Endothelial cell of umbilical vein (primary cell): ENCODE measurements at regions of chr2 and their contacts with region 1.

Region 1: DNA sequence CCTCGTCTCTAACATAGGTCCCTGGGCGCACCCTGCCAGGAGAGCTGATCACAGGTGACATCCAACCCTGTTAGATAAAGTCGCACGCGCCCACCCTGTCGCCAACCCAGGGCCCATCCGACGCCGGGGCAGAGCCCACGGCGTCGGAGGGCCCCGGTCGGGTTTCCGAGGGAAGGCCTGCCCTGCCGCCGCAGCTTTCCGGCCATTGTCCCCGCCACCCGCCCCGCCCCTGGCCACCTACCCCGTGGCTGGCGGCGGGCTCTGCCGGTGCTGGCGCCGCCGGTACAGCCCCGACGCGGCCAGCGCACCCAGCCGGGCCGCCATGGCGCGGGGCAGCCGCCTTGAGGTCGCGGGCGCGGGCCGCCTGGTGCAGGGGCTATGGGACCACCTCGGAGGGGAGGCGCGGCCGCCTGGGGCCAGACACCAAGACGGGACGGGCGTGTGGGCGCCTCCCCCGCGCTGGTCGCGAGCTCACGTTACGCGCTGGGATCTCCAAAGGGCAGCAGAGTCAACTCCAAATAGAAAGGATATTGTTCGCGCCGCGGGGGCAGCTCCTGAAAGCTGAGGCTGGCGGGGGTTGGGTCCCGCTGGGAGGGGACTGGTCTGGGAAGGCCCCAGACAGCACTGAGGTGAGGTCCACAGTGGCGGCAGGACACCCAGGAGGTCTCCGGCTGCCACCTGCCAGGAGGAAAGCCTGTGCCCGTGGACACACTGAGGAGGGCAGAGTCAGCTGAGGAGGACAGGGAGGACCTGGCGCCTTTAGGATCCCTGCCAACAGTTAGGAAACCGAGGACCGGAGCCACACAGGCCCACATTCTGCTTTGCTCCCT is 11.1 kb downstream of the LIMS2 start:
- DNase-seq: peak; percentile 50
- H3K4me3 ChIP-seq: peak overlapping the region in 2 of 3 experiments; percentile 20 to 32
- H3K27ac ChIP-seq: peak overlapping the region; percentile 80
- H3K4me1 ChIP-seq: peaks cover 48% of the 10 kb centered on the region
- H3K27me3 ChIP-seq: no peaks in the 10 kb centered on the region
- CTCF ChIP-seq: no peak
- POLR2A ChIP-seq: peak; percentile 29

Region 2: DNA sequence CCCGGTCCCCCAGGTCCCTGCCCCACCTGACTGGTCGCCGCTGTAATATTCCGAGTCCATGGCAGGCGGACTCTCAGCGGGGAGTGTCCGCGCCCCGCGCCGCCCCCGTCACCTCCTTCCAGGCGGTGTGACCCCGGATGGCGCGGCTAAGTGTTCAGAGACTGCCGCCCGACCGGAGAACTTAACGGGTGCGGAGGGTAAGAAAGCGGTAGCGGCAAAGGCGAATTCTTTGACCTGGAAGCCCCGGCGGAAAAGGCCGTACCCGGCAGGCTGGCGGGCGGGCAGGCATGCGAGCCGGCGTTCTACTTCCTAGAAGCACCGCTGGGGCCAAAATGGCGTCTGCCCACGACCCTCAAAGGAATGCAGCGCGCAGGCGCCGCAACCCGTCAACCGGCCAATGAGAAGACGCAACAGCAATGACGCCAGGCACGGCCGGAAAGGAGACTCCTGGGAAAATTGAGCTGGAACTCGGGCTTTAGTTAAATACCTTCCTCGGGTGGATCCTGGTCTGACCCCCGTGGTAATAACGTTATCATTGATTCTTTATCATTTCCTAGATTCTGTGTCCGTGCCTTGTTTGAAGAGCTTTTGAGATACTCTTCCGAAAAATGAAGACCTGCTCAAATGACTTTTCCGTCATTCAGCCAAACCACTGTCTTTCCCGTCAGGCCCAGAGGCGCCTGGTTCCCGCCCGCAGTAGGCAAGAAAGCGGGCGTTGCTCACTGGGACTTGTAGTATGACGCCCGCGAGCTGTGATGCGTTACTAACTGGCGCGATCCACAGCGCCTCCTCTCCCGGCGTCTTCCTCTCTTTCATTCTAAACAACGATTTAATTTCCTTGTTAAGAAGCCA is 137.9 kb before region 1 on chr2 and contains the start of gene IWS1:
- CTCF ChIA-PET with region 1: no interaction called
- POLR2A ChIA-PET with region 1: no interaction called
- dilution Hi-C with region 1: no loop called
- intact Hi-C with region 1: loop called (anchors 1 kb)
- DNase-seq: peak; percentile 98
- H3K4me3 ChIP-seq: peak within 1 kb of the TSS; percentile 78 to 92 (median 88)
- H3K27ac ChIP-seq: peak within 1 kb of the TSS; percentile 100
- H3K4me1 ChIP-seq: peaks cover 11% of the 10 kb centered on the region
- H3K27me3 ChIP-seq: no peaks in the 10 kb centered on the region
- CTCF ChIP-seq: peak in 1 of 2 donors; percentile 14
- POLR2A ChIP-seq: peak; percentile 88
- total RNA-seq, gene IWS1: 44.9 and 51.0 TPM in 2 replicates

Region 3: GRCh38 chr2:127637725-127638252 is 26.5 kb before region 1 on chr2:
- CTCF ChIA-PET with region 1: interaction called, 5 read pairs
- POLR2A ChIA-PET with region 1: no interaction called
- dilution Hi-C with region 1: no loop called
- intact Hi-C with region 1: loop called (anchors 1 kb)
- DNase-seq: peak; percentile 70
- H3K4me3 ChIP-seq: no peak overlapping the region
- H3K27ac ChIP-seq: peak overlapping the region; percentile 92
- H3K4me1 ChIP-seq: peaks cover 34% of the 10 kb centered on the region
- H3K27me3 ChIP-seq: no peaks in the 10 kb centered on the region
- CTCF ChIP-seq: no peak
- POLR2A ChIP-seq: peak; percentile 84

Region 4: GRCh38 chr2:127649684-127650040 is 14.6 kb before region 1 on chr2:
- CTCF ChIA-PET with region 1: interaction called, 15 read pairs
- POLR2A ChIA-PET with region 1: no interaction called
- dilution Hi-C with region 1: no loop called
- intact Hi-C with region 1: loop called (anchors 1 kb)
- DNase-seq: peak; percentile 69
- H3K4me3 ChIP-seq: no peak overlapping the region
- H3K27ac ChIP-seq: no peak overlapping the region
- H3K4me1 ChIP-seq: peaks cover 25% of the 10 kb centered on the region
- H3K27me3 ChIP-seq: no peaks in the 10 kb centered on the region
- CTCF ChIP-seq: peak; percentile 85 to 88
- POLR2A ChIP-seq: no peak

Region 5: GRCh38 chr2:127675331-127676261 is 11.3 kb after region 1 on chr2 and contains the start of gene LIMS2:
- CTCF ChIA-PET with region 1: interaction called, 9 read pairs
- POLR2A ChIA-PET with region 1: no interaction called
- dilution Hi-C with region 1: no loop called
- intact Hi-C with region 1: loop called (anchors 1 kb)
- DNase-seq: peak; percentile 36
- H3K4me3 ChIP-seq: peak within 1 kb of the TSS; percentile 48 to 58 (median 58)
- H3K27ac ChIP-seq: no peak within 1 kb of the TSS
- H3K4me1 ChIP-seq: peaks cover 18% of the 10 kb centered on the region
- H3K27me3 ChIP-seq: no peaks in the 10 kb centered on the region
- CTCF ChIP-seq: peak in 1 of 2 donors; percentile 37
- POLR2A ChIP-seq: no peak
- total RNA-seq, gene LIMS2: 45.7 and 48.3 TPM in 2 replicates

Region 6: GRCh38 chr2:127695491-127696472 is 31.5 kb after region 1 on chr2:
- CTCF ChIA-PET with region 1: interaction called, 18 read pairs
- POLR2A ChIA-PET with region 1: no interaction called
- dilution Hi-C with region 1: no loop called
- intact Hi-C with region 1: loop called (anchors 2 kb)
- DNase-seq: peak; percentile 75
- H3K4me3 ChIP-seq: peak overlapping the region in 2 of 3 experiments; percentile 21 to 22
- H3K27ac ChIP-seq: no peak overlapping the region
- H3K4me1 ChIP-seq: peaks cover 8% of the 10 kb centered on the region
- H3K27me3 ChIP-seq: no peaks in the 10 kb centered on the region
- CTCF ChIP-seq: peak; percentile 60 to 73
- POLR2A ChIP-seq: no peak

Region 7: DNA sequence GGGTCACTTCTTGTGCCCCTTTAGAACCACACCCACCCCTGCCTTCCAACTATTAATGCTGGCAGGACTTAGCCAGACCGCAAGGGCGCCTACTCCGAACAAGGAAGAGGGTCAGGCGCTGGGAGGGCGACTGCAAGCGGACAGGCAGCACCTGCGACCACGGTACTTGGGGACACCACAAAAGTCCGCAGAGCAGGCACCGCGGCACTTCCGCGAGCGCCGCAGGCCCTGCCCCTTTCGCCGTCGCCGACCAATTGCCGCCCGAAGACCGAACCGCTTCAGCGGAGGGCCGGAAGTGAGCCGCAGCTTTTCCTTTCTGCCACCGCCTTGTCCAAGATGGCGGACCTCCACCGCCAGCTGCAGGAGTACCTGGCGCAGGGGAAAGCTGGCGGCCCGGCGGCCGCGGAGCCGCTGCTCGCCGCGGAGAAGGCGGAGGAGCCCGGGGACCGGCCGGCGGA is 36.9 kb after region 1 on chr2 and contains the start of gene SFT2D3:
- CTCF ChIA-PET with region 1: interaction called, 18 read pairs
- POLR2A ChIA-PET with region 1: no interaction called
- dilution Hi-C with region 1: no loop called
- intact Hi-C with region 1: loop called (anchors 2 kb)
- DNase-seq: peak; percentile 91
- H3K4me3 ChIP-seq: peak within 1 kb of the TSS; percentile 40 to 79 (median 45)
- H3K27ac ChIP-seq: peak within 1 kb of the TSS; percentile 85
- H3K4me1 ChIP-seq: peaks cover 17% of the 10 kb centered on the region
- H3K27me3 ChIP-seq: no peaks in the 10 kb centered on the region
- CTCF ChIP-seq: no peak
- POLR2A ChIP-seq: peak; percentile 99
- total RNA-seq, gene SFT2D3: 4.4 and 4.7 TPM in 2 replicates

Region 8: DNA sequence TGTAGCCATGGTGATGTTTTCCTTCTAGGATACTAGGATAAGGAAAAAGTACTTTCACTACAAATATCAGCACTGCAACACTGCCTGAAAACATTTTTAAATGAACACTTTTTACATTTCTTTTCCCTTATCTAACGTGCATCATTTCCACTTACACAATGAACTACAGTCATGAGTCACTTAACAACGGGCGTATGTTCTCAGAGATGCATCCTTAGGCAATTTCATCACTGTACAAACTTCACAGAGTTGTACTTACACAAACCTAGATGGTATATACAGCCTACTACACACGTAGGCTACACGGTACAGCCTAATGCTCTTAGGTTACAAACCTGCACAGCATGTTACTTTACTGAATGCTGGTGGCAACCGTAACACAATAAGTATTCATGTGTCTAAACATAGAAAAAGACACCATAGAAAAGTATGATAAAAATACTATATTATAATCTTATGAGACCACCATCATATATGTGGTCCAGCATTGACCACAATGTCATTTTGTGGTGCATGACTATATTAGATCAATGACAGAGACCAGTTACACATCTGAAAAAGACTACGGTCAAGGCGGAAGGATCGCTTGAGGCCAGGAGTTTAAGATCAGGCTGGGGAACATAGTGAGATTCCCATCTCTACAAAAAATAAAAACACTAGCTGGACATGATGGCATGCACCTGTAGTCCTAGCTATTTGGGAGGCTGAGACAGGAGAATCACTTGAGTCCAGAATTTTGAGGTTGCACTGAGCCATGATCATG is 106.9 kb after region 1 on chr2:
- CTCF ChIA-PET with region 1: no interaction called
- POLR2A ChIA-PET with region 1: no interaction called
- dilution Hi-C with region 1: no loop called
- intact Hi-C with region 1: no loop called
- DNase-seq: peak; percentile 69
- H3K4me3 ChIP-seq: no peak overlapping the region
- H3K27ac ChIP-seq: peak overlapping the region; percentile 80
- H3K4me1 ChIP-seq: peaks cover 12% of the 10 kb centered on the region
- H3K27me3 ChIP-seq: no peaks in the 10 kb centered on the region
- CTCF ChIP-seq: no peak
- POLR2A ChIP-seq: no peak